Right lobe of liver (tissue), 6 donors: ENCODE measurements at regions of chr1 and their contacts with region 1.

Region 1: GRCh38 chr1:107529502-107530149 is 388.8 kb downstream of the NTNG1 start:
- DNase-seq: no peak
- ATAC-seq: peak; percentile 82 to 89 (median 88)
- H3K4me3 ChIP-seq: no peak overlapping the region
- H3K27ac ChIP-seq: no peak overlapping the region
- H3K4me1 ChIP-seq: no peaks in the 10 kb centered on the region
- H3K27me3 ChIP-seq: no peaks in the 10 kb centered on the region
- CTCF ChIP-seq: peak; percentile 59 to 79 (median 72)
- POLR2A ChIP-seq: no peak

Region 2: GRCh38 chr1:107153014-107153413 is 376.6 kb before region 1 on chr1:
- intact Hi-C with region 1: no loop called
- DNase-seq: no peak
- ATAC-seq: no peak
- H3K4me3 ChIP-seq: no peak overlapping the region
- H3K27ac ChIP-seq: no peak overlapping the region
- H3K4me1 ChIP-seq: no peaks in the 10 kb centered on the region
- H3K27me3 ChIP-seq: no peaks in the 10 kb centered on the region
- CTCF ChIP-seq: peak in 1 of 4 donors; percentile 19
- POLR2A ChIP-seq: no peak

Region 3: DNA sequence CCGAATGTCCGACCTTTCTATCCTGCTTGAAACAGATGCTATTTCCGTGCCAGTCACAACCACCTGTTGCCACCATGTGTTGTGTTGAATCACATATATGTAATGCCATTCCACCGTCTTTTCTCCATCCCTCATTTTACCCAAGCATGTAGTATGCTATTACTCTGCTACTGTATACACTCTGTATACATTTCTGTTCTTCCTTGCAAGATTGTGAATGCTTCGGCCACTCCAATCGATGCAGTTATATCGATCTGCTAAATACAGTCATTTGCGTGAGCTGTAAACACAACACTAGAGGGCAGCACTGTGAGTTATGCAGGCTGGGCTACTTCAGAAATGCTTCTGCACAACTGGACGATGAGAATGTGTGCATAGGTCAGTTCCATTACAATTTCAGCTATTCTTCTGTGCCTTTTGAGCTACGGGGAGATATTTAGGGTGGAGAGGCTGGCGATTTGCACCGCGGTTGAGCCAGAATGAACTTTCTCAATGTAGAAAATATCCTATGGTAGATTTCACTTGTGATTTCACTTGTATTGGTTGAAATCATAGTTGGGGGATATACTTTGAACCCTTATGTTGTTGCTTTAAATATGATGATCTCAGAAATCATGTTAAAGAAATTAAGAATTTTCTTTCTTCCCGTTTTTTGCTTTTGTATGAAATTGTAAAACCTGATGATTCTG is 98.9 kb before region 1 on chr1:
- intact Hi-C with region 1: loop called in 1 of 2 experiments (anchors 5 kb)
- DNase-seq: peak in 2 of 3 donors; percentile 28 to 59
- ATAC-seq: peak; percentile 92 to 98 (median 96)
- H3K4me3 ChIP-seq: no peak overlapping the region
- H3K27ac ChIP-seq: no peak overlapping the region
- H3K4me1 ChIP-seq: peaks cover 0 to 4% (median 0%) of the 10 kb centered on the region in 4 donors
- H3K27me3 ChIP-seq: no peaks in the 10 kb centered on the region
- CTCF ChIP-seq: peak; percentile 71 to 81 (median 78)
- POLR2A ChIP-seq: no peak

Region 4: GRCh38 chr1:107450899-107451664 is 78.5 kb before region 1 on chr1:
- intact Hi-C with region 1: no loop called
- DNase-seq: no peak
- ATAC-seq: no peak
- H3K4me3 ChIP-seq: no peak overlapping the region
- H3K27ac ChIP-seq: no peak overlapping the region
- H3K4me1 ChIP-seq: no peaks in the 10 kb centered on the region
- H3K27me3 ChIP-seq: no peaks in the 10 kb centered on the region
- CTCF ChIP-seq: no peak
- POLR2A ChIP-seq: no peak